HEK293 (cell line): ENCODE measurements at regions of chr17 and their contacts with region 1.

Region 1: DNA sequence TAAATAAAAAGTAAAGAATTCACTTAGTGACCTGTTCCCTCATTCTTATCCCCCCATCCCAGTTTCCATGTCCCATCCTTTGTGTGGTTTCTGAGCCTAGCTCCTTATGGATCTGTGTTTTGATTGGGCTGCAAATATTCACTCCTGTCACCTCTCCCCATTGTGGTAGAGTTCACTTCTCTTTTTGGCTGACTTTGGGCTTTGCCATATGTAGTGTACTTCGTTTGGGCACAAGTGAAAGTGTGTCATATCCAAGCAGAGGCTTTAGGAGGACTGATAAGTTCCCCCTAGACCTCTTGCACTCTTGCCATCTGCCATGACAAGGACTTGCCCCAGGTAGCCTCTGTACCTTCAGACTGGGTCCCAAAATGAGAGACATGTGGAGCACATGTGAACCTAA is 13.0 kb upstream of the DHRS7B start:
- H3K4me3 ChIP-seq: no peak overlapping the region
- H3K27ac ChIP-seq: no peak overlapping the region
- H3K4me1 ChIP-seq: no peaks in the 10 kb centered on the region
- CTCF ChIP-seq: no peak

Region 2: GRCh38 chr17:21126645-21127510 is 13.2 kb after region 1 on chr17 and contains the start of gene DHRS7B:
- CTCF ChIA-PET with region 1: interaction called, 49 read pairs
- POLR2A ChIA-PET with region 1: no interaction called
- H3K4me3 ChIP-seq: peak within 1 kb of the TSS; percentile 90
- H3K27ac ChIP-seq: peak within 1 kb of the TSS; percentile 80
- H3K4me1 ChIP-seq: peaks cover 2% of the 10 kb centered on the region
- CTCF ChIP-seq: peak; percentile 33; the same call in 1 of the 2 replicates

Region 3: DNA sequence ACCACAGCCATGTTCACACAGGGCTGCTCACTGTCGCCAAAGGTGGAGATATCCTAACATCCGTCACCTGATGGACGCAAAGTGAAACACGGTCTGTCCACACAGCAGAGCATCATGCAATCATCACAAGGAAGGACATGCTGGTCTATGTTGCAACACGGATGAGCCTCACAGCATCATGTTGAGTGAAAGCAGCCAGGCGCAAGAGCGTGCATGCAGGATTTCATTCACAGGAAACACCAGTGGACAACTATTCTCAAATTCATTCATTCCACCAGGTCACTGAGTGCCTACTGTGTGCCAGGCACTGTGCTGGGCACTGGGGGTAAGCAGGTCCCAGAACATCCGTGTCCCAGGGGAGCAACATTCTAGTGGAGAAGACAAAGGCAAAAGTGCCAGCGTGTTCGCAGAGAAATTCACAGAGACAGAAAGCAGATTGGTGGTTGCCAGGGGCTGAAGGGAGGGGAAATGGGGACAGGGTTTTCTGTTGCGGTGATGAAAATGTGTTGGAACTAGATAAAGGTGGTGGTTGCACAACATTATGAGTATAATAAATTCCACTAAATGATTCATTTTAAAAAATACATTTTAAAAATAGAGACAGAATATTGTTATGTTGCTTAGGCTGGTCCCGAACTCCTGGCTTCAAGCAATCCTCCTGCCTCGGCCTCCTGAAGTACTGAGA is 239.8 kb after region 1 on chr17:
- CTCF ChIA-PET with region 1: no interaction called
- POLR2A ChIA-PET with region 1: no interaction called
- H3K4me3 ChIP-seq: no peak overlapping the region
- H3K27ac ChIP-seq: no peak overlapping the region
- H3K4me1 ChIP-seq: no peaks in the 10 kb centered on the region
- CTCF ChIP-seq: no peak